Right ventricle myocardium superior (tissue), 1 donor: ENCODE measurements at regions of chrX and their contacts with region 1.

Region 1: GRCh38 chrX:69060631-69061408 is 104.4 kb downstream of the PJA1 start:
- DNase-seq: no peak
- ATAC-seq: peak; percentile 86

Region 2: DNA sequence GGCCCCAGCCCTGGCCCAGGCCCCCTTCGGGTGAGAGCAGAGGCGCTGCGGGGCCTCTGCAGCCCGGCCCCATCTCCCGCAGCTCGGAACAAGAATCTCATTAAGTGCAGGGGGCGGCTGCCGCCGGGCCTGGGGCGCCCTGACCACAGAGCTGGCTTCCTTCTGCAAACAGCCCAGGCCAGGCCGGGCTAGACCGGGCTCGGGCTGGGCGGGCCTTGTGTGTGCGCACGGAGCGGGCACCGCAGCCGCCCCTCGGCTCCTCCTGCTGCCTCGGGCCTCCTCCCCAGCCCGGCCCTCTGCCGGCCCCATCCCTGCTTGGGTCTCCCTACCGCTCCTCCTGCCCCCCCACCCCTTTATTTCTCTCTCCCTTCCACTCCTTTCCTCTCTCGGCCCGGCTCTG is 148.7 kb before region 1 on chrX:
- intact Hi-C with region 1: loop called (anchors 10 kb)
- DNase-seq: no peak
- ATAC-seq: no peak

Region 3: GRCh38 chrX:69014200-69014599 is 46.6 kb before region 1 on chrX:
- intact Hi-C with region 1: no loop called
- DNase-seq: no peak
- ATAC-seq: no peak